Naive thymus-derived CD8-positive, alpha-beta T cell (primary cell): ENCODE measurements at regions of chr4 and their contacts with region 1.

Region 1: GRCh38 chr4:83110223-83110945 is 4.1 kb downstream of the PLAC8 start:
- DNase-seq: peak; percentile 77 to 93 (median 88)
- ATAC-seq: peak; percentile 76
- H3K4me3 Mint-ChIP-seq: peak overlapping the region; percentile 90 to 100 (median 97)
- H3K27ac Mint-ChIP-seq: peak overlapping the region; percentile 90 to 99 (median 98)
- H3K4me1 Mint-ChIP-seq: peaks cover 18 to 57% (median 44%) of the 10 kb centered on the region in 4 donors
- H3K27me3 Mint-ChIP-seq: no peaks in the 10 kb centered on the region

Region 2: GRCh38 chr4:83074086-83074704 is 36.2 kb before region 1 on chr4:
- POLR2A ChIA-PET with region 1: interaction called, 12 read pairs
- DNase-seq: peak in 9 of 10 donors; percentile 51 to 91 (median 77)
- ATAC-seq: peak; percentile 97 to 98
- H3K4me3 Mint-ChIP-seq: peak overlapping the region; percentile 39 to 84 (median 76)
- H3K27ac Mint-ChIP-seq: peak overlapping the region; percentile 0 to 90 (median 80)
- H3K4me1 Mint-ChIP-seq: peaks cover 5 to 27% (median 8%) of the 10 kb centered on the region in 4 donors
- H3K27me3 Mint-ChIP-seq: no peaks in the 10 kb centered on the region

Region 3: GRCh38 chr4:83097018-83097417 is 13.4 kb before region 1 on chr4:
- POLR2A ChIA-PET with region 1: interaction called, 38 read pairs
- DNase-seq: no peak
- ATAC-seq: no peak
- H3K4me3 Mint-ChIP-seq: peak overlapping the region in 1 of 10 donors; percentile 16
- H3K27ac Mint-ChIP-seq: peak overlapping the region; percentile 24 to 87 (median 71)
- H3K4me1 Mint-ChIP-seq: peaks cover 25 to 75% (median 62%) of the 10 kb centered on the region in 4 donors
- H3K27me3 Mint-ChIP-seq: no peaks in the 10 kb centered on the region

Region 4: GRCh38 chr4:83138946-83139345 is 28.6 kb after region 1 on chr4:
- POLR2A ChIA-PET with region 1: interaction called, 26 read pairs
- DNase-seq: peak in 6 of 10 donors; percentile 22 to 58 (median 40)
- ATAC-seq: peak; percentile 95 to 99
- H3K4me3 Mint-ChIP-seq: peak overlapping the region in 9 of 10 donors; percentile 10 to 72 (median 51)
- H3K27ac Mint-ChIP-seq: peak overlapping the region; percentile 82 to 94 (median 88)
- H3K4me1 Mint-ChIP-seq: peaks cover 27 to 52% (median 33%) of the 10 kb centered on the region in 4 donors
- H3K27me3 Mint-ChIP-seq: no peaks in the 10 kb centered on the region

Region 5: DNA sequence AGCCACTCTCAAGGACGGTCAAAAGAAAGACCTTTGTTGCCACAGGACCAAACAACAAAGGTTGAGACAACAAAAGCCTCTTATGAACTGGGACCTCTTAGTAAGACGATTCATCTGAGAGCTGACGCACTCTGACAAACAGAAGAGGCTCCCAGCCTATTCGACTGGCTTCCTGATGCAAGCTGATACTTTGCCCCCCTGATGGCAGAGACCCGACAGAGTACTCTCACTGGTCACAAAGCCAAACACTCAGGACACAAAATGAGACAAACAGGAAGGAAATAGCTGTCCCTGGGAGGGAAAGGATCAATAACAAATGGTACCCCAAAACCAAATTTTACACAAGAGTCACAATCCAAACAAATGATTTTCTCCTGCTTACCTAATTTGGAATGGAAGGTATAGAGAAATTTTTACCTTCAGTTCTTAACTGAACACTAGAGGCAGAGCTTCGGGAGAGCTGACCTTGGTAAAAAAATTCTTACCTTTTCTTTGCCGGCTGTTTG is 79.3 kb after region 1 on chr4:
- POLR2A ChIA-PET with region 1: no interaction called
- DNase-seq: no peak
- ATAC-seq: no peak
- H3K4me3 Mint-ChIP-seq: no peak overlapping the region
- H3K27ac Mint-ChIP-seq: peak overlapping the region in 3 of 10 donors; percentile 17 to 60 (median 53)
- H3K4me1 Mint-ChIP-seq: peaks cover 5 to 16% (median 9%) of the 10 kb centered on the region in 4 donors
- H3K27me3 Mint-ChIP-seq: no peaks in the 10 kb centered on the region

Region 6: GRCh38 chr4:83212041-83212851 is 101.9 kb after region 1 on chr4:
- POLR2A ChIA-PET with region 1: interaction called, 104 read pairs
- DNase-seq: peak; percentile 24 to 94 (median 76)
- ATAC-seq: peak; percentile 89 to 95
- H3K4me3 Mint-ChIP-seq: peak overlapping the region; percentile 57 to 83 (median 71)
- H3K27ac Mint-ChIP-seq: peak overlapping the region; percentile 83 to 97 (median 94)
- H3K4me1 Mint-ChIP-seq: peaks cover 37 to 88% (median 82%) of the 10 kb centered on the region in 4 donors
- H3K27me3 Mint-ChIP-seq: no peaks in the 10 kb centered on the region

Region 7: DNA sequence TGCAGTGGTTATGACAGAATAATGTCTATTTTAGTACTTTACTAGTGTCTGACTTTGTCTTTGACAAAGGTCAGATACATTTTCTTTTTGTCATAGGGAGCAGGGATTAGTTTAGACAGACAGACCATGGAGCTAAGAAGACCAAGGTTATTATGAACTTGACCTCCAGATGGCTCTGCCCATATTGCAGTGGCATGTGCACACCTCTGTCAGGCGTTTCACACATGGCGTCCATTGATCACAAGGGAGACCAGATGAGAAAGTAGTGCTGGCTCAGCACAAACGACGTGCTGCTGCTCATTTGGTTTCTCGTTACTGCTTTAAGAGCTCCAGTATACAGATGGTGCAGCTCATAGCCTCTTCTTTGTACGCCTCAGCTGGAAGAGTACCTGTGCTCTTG is 280.6 kb after region 1 on chr4:
- POLR2A ChIA-PET with region 1: no interaction called
- DNase-seq: no peak
- ATAC-seq: no peak
- H3K4me3 Mint-ChIP-seq: no peak overlapping the region
- H3K27ac Mint-ChIP-seq: peak overlapping the region in 1 of 10 donors; percentile 9
- H3K4me1 Mint-ChIP-seq: peaks cover 6 to 31% (median 12%) of the 10 kb centered on the region in 4 donors
- H3K27me3 Mint-ChIP-seq: no peaks in the 10 kb centered on the region